Adrenal gland (tissue), 19 donors: ENCODE measurements at regions of chr7 and their contacts with region 1.

Region 1: GRCh38 chr7:46809881-46810280 is 772.0 kb downstream of the TNS3 start:
- DNase-seq: no peak
- H3K4me3 ChIP-seq: no peak overlapping the region
- H3K27ac ChIP-seq: no peak overlapping the region
- H3K4me1 ChIP-seq: no peaks in the 10 kb centered on the region
- H3K27me3 ChIP-seq: no peaks in the 10 kb centered on the region
- CTCF ChIP-seq: no peak
- POLR2A ChIP-seq: no peak

Region 2: GRCh38 chr7:47066971-47067614 is 257.2 kb after region 1 on chr7:
- intact Hi-C with region 1: loop called in 1 of 2 experiments (anchors 10 kb)
- DNase-seq: no peak
- H3K4me3 ChIP-seq: no peak overlapping the region
- H3K27ac ChIP-seq: no peak overlapping the region
- H3K4me1 ChIP-seq: no peaks in the 10 kb centered on the region
- H3K27me3 ChIP-seq: peaks cover 3% of the 10 kb centered on the region
- CTCF ChIP-seq: no peak
- POLR2A ChIP-seq: no peak